ENCODE measurements at regions of chr3 and their contacts with region 1.

Region 1: GRCh38 chr3:136624894-136625815 is 127.0 kb downstream of the STAG1 start:
- DNase-seq: no peak
- ATAC-seq: no peak

Region 2: DNA sequence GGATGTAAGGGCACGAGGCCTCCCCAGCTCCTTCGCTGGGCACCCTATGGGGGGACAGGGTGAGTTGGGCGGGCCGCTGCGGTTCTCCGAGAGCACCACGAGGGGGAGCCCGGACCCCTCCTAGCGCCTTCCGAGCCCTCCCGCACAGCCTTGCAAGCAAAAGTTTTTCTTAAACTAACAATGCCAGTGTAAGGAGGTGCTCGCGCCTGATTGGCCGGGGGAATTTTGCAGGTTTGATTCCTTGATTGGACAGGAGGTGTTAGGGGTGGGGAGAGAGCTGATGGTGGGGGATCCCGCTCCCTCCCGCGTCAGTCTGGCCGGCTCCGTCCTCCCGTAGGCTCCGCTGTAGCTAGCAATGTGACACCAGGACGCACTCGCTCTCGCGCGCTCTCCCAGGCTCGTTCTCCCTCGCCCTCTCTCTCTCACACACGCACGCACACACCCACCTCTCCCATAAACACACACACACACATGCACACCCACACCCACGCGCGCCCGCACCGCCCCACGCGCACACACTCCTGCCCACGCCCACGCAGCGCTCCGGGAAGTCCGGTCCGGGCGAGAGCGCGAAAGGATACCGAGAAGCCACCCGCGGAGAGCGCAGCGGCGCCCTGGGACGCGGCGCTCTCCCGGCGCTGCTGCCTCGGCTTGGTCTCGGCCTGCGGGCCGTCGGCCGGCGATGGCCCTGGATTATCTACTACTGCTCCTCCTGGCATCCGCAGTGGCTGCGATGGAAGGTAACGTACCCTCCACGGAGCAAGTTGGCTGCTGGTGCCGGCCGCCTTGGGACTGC is 1830.0 kb before region 1 on chr3 and contains the start of gene EPHB1:
- intact Hi-C with region 1: loop called (anchors 10 kb)
- DNase-seq: peak; percentile 85
- ATAC-seq: peak; percentile 87
- total RNA-seq, gene EPHB1: 6.6 TPM

Region 3: DNA sequence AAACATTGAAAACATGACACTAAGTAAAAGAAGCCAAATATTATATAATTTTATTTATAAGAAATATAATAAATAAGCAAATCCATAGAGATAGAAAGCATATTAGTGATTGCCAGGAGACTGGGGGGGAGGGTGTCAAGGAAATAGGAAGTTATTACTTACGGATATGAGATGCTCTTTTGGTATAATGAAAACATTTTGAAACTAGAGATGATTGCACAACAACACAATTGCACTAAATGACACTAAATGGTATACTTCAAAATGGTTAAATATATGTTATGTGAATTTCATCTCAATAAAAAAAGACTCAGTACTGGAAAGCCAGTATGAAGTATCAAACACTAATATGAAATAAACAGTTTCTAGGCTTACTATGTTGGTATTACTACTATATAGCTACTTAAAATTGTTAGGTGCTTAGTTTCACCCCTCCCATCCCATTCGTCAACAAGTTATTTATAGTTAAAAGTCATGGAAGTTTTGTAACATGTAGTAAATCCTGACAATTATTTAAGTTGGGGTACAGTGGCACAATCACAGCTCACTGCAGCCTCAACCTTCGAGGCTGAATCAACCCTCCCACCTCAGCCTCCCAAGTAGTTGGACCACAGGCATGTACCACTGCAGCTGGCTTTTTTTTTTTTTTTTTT is 83.3 kb after region 1 on chr3:
- intact Hi-C with region 1: no loop called
- DNase-seq: no peak
- ATAC-seq: no peak

Region 4: GRCh38 chr3:138051946-138052802 is 1427.0 kb after region 1 on chr3:
- intact Hi-C with region 1: no loop called
- DNase-seq: no peak
- ATAC-seq: peak; percentile 26

Measured in sciatic nerve (tissue), 2 donors.